AG04449 (cell line): ENCODE measurements at regions of chr4 and their contacts with region 1.

Region 1: DNA sequence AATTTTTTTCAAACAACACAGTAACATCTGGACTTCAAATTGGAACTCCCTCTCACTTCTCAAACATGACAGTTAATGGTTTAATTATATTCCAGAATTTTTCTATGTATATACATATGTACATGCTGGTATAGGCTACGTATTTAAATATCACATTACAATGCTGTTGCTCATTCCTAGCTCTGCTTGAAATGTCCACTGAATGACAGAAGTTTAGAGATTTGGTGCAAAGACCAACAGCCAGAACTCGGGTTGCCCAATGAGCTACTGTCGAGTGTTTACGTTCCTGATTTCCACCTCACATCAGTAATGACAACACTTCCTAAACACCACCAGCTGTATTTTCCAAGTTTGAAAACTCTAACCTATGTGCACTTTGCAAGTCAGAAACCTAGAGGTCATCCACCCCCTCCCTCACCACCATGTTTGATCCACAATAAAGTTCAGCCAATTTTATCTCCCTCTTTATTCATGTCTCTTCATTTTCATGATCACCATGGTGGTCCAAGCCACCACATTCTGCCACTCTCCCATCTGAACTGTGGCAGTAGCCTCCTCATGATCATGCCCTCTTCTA is 49.3 kb upstream of the RPL34 start:
- DNase-seq: no peak
- H3K4me3 ChIP-seq: no peak overlapping the region
- CTCF ChIP-seq: no peak

Region 2: GRCh38 chr4:108018040-108018883 is 552.8 kb before region 1 on chr4:
- CTCF ChIA-PET with region 1: interaction called, 176 read pairs
- POLR2A ChIA-PET with region 1: interaction called, 5 read pairs
- DNase-seq: peak; percentile 17
- H3K4me3 ChIP-seq: no peak overlapping the region
- CTCF ChIP-seq: peak; percentile 77

Region 3: DNA sequence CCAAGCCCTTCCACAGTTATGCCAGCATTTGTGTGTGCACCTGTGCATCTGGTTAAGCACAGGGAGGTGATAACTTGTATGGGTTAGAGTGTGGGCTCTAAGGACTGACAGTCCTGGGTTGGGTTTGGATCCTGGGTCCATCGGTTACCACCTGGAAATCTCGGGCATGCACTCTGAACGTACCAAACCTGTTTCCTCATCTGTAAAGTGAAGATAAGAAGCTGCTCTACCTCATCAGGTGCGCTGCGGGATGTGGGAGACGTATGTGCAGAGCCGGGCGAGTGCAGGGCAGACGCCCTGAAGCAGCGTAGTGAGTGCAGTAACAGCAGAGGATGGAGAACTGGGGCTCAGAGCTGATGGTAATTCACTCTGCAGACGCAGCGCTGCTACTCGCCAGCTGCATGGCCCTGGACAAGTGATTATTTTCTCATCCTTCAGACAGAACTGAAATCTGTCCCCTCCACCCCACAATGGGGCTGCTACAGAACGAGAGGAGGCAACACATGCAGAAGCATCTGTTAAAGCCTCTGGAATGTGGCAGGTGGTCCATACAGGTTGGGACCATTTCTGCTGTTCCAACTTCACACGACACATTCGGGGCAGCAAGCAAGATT is 516.9 kb before region 1 on chr4:
- CTCF ChIA-PET with region 1: interaction called, 49 read pairs
- POLR2A ChIA-PET with region 1: no interaction called
- DNase-seq: no peak
- H3K4me3 ChIP-seq: no peak overlapping the region
- CTCF ChIP-seq: no peak

Region 4: DNA sequence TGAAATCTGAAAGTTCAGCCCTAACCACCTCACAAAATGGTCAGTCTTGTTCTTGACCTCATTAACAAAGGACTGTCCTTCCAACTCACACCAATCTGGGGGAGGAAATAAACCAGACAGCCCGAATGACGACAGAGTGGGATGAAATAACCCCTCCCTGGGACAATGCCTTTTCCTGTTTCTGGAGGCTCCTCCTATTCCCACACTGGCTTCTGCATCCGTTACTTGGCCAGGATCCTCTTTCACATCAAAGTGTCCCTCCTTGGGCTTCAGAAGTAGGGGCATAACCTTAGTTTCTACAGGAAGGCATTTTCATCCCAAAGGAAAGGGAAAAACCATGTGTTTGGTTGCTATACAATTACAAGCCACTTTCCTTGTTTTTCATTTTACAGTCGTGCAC is 10.5 kb before region 1 on chr4:
- CTCF ChIA-PET with region 1: interaction called, 56 read pairs
- POLR2A ChIA-PET with region 1: no interaction called
- DNase-seq: no peak
- H3K4me3 ChIP-seq: no peak overlapping the region
- CTCF ChIP-seq: no peak

Region 5: GRCh38 chr4:108592674-108592986 is 21.5 kb after region 1 on chr4:
- CTCF ChIA-PET with region 1: interaction called, 38 read pairs
- POLR2A ChIA-PET with region 1: no interaction called
- DNase-seq: no peak
- H3K4me3 ChIP-seq: no peak overlapping the region
- CTCF ChIP-seq: no peak